ENCODE measurements at regions of chr1 and their contacts with region 1.

Region 1: DNA sequence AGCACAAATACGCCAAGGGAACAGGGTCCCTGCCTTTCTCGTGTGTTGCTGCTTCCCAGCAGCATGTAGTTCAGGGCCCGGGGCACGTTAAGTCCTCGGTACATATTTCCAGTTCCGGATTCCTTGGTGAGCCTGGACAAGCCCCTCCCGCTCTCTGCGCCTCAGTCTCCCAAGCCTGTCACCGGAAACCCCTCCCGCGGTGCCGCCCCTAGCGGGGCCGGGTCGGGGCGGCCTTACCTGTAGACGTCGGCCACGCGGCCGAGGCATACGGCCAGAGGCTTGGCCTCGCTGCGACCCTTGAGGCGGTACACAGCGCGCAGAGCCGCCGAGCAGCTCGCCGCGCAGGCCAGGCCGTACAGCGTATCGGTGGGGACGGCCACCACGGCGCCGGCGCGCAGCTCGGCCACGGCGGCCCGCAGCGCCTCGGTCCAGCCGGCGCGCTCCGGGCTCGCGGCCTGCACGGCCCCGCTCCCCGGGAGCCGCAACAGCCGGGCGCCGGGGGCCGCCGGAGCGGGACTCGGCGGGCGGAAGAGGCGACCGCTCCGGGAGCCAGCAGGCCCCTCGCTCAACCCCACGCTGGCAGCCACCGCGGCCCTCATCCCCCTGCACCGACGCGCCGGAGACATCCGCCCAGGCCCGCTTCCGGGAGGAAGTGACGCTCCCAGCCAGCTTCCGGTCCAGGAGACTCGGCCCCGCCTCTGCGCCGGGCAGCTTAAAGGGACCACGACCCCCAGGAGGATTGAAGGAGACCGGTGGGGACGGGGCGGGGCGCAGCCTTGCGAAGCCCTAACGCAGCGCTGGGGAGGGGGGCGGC is at the starts of genes C1orf122 and YRDC:
- DNase-seq: peak; percentile 71
- H3K4me3 ChIP-seq: peak within 1 kb of the TSS; percentile 87
- H3K27ac ChIP-seq: peak within 1 kb of the TSS; percentile 77
- H3K27me3 ChIP-seq: no peaks in the 10 kb centered on the region
- CTCF ChIP-seq: no peak
- polyA plus RNA-seq, gene C1orf122: 26.0 and 30.3 TPM in 2 replicates
- polyA plus RNA-seq, gene YRDC: 15.2 and 15.6 TPM in 2 replicates

Region 2: GRCh38 chr1:37822906-37823815 is 15.4 kb after region 1 on chr1:
- CTCF ChIA-PET with region 1: interaction called, 6 read pairs
- POLR2A ChIA-PET with region 1: interaction called, 13 read pairs
- DNase-seq: no peak
- H3K4me3 ChIP-seq: no peak overlapping the region
- H3K27ac ChIP-seq: no peak overlapping the region
- H3K27me3 ChIP-seq: no peaks in the 10 kb centered on the region
- CTCF ChIP-seq: no peak

Measured in AG04450 (cell line).